MCF 10A (cell line): ENCODE measurements at regions of chr20 and their contacts with region 1.

Region 1: DNA sequence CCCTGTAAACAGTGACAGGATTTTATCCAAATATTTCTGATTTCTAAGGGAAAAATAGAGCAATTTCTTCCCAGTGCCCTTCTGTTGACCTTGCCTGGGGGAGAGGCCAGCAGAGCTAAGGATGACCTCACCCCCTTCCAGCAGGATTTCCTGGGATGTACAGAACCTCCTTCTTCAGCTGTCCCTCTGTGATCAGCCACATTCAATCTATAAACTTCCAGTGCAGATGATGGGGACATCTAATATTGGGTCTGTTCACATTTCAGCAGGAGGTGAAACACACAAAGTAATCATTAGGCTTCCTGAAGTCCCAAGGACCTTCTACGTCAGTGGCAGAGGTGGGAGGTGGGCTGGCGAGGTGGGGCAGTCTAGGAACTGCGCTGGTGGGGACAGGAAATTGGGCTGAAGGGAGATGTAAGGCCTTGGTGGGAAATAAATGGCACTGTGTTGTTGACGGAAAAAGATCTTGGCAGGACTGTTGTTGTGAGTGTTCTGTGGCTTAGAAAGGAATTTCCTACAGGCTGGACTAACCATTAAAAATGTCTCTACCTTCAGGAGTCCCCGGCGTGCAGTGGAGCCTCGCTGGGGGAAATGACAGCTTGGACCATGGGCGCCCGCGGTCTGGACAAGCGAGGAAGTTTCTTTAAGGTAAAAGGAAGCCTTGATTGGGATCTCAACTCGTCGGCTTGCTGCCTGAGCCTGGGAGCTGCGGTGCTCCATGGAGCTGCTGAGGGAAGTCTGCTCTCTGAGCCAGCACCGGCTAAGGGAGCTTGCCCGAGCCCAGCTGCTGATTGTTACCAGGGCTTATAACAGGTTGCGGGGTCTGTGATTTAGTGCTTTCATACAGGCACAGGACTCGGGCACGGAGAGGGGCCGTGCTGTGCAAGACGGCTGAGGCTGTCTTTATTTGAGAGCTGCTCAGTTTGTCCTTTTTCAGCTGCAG is 127.9 kb upstream of the NAA20 start:
- DNase-seq: peak; percentile 48
- H3K4me3 Mint-ChIP-seq: peak overlapping the region; percentile 60
- H3K27ac Mint-ChIP-seq: peak overlapping the region; percentile 94
- H3K4me1 Mint-ChIP-seq: peaks cover 48% of the 10 kb centered on the region
- H3K27me3 Mint-ChIP-seq: no peaks in the 10 kb centered on the region
- CTCF ChIP-seq: no peak

Region 2: GRCh38 chr20:19249106-19249879 is 640.0 kb before region 1 on chr20:
- CTCF ChIA-PET with region 1: no interaction called
- POLR2A ChIA-PET with region 1: no interaction called
- intact Hi-C with region 1: no loop called
- DNase-seq: peak; percentile 38
- H3K4me3 Mint-ChIP-seq: no peak overlapping the region
- H3K27ac Mint-ChIP-seq: no peak overlapping the region
- H3K4me1 Mint-ChIP-seq: peaks cover 20% of the 10 kb centered on the region
- H3K27me3 Mint-ChIP-seq: no peaks in the 10 kb centered on the region
- CTCF ChIP-seq: no peak

Region 3: GRCh38 chr20:19735446-19735845 is 153.8 kb before region 1 on chr20:
- CTCF ChIA-PET with region 1: interaction called, 4 read pairs
- POLR2A ChIA-PET with region 1: interaction called, 7 read pairs
- intact Hi-C with region 1: loop called (anchors 5 kb)
- DNase-seq: peak; percentile 96
- H3K4me3 Mint-ChIP-seq: peak overlapping the region; percentile 27
- H3K27ac Mint-ChIP-seq: peak overlapping the region; percentile 87
- H3K4me1 Mint-ChIP-seq: peaks cover 25% of the 10 kb centered on the region
- H3K27me3 Mint-ChIP-seq: no peaks in the 10 kb centered on the region
- CTCF ChIP-seq: no peak

Region 4: DNA sequence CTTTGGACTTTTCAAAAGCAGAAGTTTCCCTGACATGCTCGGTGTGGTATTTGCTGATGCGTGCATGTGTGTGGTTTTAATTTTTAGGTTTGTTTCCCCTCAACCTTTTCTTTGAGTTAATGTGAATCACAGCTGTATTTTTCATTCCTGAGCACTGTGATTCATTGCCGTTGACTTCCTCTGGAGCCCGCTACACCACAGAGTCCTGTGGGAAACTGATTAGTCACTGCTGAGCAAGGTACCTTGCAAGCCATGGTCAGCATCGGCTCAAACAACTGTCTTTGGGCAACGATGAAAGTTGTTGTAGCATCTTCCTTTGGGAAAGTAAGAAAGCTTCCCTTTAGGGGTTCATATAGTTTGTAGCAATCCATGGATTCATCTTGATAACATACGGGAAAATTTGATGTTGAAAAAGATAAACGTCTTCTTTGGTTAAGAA is 73.7 kb before region 1 on chr20:
- CTCF ChIA-PET with region 1: interaction called, 3 read pairs
- POLR2A ChIA-PET with region 1: interaction called, 29 read pairs
- intact Hi-C with region 1: loop called (anchors 5 kb)
- DNase-seq: peak; percentile 95
- H3K4me3 Mint-ChIP-seq: peak overlapping the region; percentile 44
- H3K27ac Mint-ChIP-seq: peak overlapping the region; percentile 90
- H3K4me1 Mint-ChIP-seq: peaks cover 20% of the 10 kb centered on the region
- H3K27me3 Mint-ChIP-seq: no peaks in the 10 kb centered on the region
- CTCF ChIP-seq: no peak

Region 5: DNA sequence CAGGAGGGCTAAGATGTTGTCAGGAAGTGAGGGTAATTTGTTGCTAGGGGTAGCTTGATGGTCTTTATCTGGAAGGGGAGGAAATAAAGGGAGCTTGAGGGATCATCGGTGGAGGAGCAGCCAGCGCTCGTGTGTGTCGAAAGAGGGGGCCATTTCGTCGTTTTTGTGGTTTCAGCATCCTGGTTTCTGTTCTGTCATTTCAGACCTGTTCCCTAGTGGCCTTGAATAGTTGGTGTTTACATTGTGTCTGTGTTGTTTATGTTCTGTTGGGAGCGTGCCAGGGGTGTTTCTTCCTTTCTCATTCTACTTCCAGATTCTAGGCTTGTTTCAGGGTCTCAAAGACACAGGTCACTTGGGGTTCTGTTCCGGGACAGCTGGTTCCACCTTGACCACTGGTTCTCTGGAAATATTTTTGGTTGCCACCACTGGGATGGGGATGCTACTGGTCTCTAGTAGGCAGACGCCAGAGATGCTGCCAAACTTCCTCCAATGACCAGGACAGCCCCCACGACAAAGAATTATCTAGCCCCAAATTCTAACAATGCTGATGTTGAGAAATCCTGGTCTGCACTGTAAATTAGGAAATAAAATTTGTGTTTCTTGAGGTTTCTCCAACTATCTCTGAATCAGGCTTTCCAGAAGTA is 14.0 kb after region 1 on chr20:
- CTCF ChIA-PET with region 1: interaction called, 16 read pairs
- POLR2A ChIA-PET with region 1: interaction called, 4 read pairs
- intact Hi-C with region 1: no loop called
- DNase-seq: peak; percentile 30
- H3K4me3 Mint-ChIP-seq: no peak overlapping the region
- H3K27ac Mint-ChIP-seq: no peak overlapping the region
- H3K4me1 Mint-ChIP-seq: peaks cover 5% of the 10 kb centered on the region
- H3K27me3 Mint-ChIP-seq: no peaks in the 10 kb centered on the region
- CTCF ChIP-seq: no peak

Region 6: DNA sequence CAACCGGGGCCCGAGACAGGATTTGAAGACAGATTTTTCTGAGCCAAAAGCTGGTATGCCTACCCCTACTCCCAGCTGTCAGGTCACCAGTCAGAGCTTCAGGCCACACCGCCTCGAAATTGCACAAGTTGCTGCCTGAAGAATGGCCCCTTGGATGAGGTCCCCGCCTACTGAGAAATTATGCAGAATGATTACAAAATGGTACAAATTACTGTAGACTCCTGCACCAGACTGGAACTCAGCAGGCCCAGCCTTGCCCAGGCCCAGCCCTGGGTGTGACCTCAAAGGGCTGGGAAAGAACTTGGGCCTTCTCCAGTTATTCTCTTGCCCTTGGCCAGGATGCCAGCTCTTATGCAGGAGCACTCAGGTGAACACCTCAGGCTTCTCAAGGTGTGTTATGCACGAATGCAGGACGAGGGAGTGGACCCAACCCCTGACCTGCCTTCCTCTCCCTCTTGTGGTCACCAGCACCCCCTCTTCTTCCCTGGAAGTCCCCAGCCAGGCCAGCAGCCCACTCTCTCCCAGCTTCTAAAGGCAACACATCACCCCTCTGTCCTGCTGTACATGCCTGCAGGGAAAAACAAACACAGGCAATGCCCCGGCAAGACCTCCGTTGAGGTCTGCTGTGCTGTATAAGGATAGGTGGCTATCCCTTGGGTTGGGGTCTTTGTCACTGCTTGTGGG is 39.2 kb after region 1 on chr20:
- CTCF ChIA-PET with region 1: interaction called, 6 read pairs
- POLR2A ChIA-PET with region 1: interaction called, 35 read pairs
- intact Hi-C with region 1: no loop called
- DNase-seq: peak; percentile 97
- H3K4me3 Mint-ChIP-seq: peak overlapping the region; percentile 14
- H3K27ac Mint-ChIP-seq: peak overlapping the region; percentile 90
- H3K4me1 Mint-ChIP-seq: peaks cover 19% of the 10 kb centered on the region
- H3K27me3 Mint-ChIP-seq: no peaks in the 10 kb centered on the region
- CTCF ChIP-seq: no peak

Region 7: DNA sequence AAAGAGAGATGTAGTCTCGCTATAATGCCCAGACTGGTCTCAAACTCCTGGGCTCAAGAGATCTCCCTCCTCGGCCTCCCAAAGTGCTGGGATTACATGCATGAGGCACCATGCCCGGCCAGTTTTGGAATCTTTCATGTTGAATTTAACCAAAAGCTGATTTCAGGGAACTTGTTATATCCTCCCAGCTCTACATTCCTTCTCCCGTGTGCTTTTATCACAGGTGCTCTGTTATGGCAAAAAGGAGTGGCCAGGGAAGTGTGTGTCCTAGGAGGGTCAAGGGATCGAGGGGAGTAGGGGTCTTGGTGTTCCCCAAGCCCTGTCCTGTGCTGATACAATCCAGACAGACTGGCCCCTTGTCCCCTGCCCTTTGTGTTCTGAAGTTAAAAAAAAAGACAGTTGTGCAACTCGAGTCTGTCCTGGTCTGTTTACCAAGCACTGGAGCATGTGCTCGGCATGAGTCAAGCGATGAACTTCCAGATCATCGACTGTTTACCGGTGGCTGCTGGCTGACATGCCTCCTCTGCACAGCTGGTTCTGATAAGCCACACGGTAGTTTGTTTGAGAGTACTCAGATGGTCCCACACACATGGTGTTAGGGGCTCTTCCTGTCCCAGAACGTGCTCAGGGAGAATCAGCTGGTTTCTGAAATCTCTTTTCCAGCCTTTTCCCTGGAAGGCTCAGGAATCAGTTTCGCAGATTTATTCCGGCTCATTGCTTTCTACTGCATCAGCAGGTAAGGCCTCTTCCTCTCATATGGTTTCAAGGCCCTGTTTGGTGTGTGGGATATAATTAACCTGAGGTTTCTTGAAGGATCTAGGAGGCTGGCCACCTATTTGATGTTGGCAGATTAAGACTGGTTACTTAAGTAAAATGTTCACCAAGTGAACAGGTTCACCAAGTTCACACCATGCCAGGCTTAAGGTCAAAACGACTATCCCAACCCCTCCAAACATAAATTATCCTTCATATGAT is 75.3 kb after region 1 on chr20:
- CTCF ChIA-PET with region 1: interaction called, 7 read pairs
- POLR2A ChIA-PET with region 1: interaction called, 21 read pairs
- intact Hi-C with region 1: no loop called
- DNase-seq: peak; percentile 80
- H3K4me3 Mint-ChIP-seq: no peak overlapping the region
- H3K27ac Mint-ChIP-seq: peak overlapping the region; percentile 87
- H3K4me1 Mint-ChIP-seq: peaks cover 15% of the 10 kb centered on the region
- H3K27me3 Mint-ChIP-seq: no peaks in the 10 kb centered on the region
- CTCF ChIP-seq: no peak